AG04449 (cell line): ENCODE measurements at regions of chr11 and their contacts with region 1.

Region 1: GRCh38 chr11:75388386-75389275 is 10.7 kb upstream of the RPS3 start:
- DNase-seq: no peak
- H3K4me3 ChIP-seq: no peak overlapping the region
- CTCF ChIP-seq: peak; percentile 71

Region 2: DNA sequence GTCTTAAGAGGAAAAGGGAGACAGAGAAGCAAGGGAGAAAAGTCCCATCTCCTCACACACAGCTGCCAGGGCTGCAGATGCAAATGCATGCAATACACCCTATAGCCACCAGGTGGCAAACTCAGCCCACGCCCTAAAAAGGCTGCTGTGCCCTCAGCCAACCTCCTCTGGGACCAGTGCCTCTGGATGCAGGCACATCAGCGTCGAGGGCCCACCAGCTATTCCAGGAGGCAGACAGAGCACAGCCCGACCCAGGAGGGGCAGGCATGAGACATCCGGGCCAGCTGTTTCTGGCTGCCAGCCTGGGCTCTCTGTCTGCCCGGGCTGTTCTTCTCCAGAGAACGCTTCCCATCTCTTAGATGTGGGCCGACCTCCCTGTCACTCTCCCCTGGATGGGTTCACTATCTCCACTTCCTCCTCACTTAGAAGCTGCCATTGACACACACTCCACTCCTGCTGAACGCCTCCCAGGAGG is 108.4 kb before region 1 on chr11:
- CTCF ChIA-PET with region 1: interaction called, 534 read pairs
- POLR2A ChIA-PET with region 1: no interaction called
- DNase-seq: no peak
- H3K4me3 ChIP-seq: no peak overlapping the region
- CTCF ChIP-seq: peak; percentile 94

Region 3: GRCh38 chr11:75328426-75329277 is 60.0 kb before region 1 on chr11:
- CTCF ChIA-PET with region 1: interaction called, 396 read pairs
- POLR2A ChIA-PET with region 1: interaction called, 3 read pairs
- DNase-seq: peak; percentile 40
- H3K4me3 ChIP-seq: no peak overlapping the region
- CTCF ChIP-seq: peak; percentile 85

Region 4: DNA sequence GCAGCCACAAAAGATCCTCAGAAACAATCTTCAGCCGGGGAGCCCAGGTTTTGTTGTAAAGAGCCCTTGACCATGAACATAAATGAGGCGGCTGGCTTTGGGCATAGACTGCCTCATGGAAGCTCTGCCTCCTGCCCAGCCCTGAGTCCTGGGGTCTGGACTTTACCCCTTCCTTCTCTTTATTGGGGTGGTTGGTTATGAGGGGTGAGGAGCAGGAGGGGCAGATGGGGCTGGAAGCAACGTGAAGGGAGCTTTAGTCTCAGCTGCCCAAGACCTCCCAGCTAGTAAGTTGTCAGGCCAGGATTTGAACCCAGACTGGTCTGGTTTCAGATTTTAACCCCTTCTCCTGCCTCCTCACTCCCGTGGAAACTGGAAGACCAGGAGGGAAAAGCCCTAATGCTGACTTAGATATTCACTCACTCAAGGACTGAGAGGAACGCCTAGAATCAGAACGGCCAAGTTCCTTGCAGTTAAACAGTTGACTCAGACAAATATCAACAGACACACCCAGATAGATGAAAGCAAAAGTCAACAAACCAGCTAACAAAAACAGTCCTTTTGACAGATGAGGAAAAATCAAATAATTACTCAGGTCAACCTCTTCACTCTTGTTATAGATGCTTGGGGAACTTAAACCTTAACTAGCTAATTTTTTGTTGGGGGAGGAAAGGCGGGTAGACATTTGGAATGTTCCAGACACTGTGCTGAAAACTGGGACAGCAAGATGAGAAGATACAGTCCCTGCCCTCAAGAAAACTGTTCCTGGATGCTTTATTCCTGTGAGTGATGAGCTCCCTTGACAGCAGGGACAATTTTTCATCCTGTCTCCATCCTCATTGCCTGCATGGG is 16.5 kb before region 1 on chr11:
- CTCF ChIA-PET with region 1: interaction called, 62 read pairs
- POLR2A ChIA-PET with region 1: no interaction called
- DNase-seq: no peak
- H3K4me3 ChIP-seq: no peak overlapping the region
- CTCF ChIP-seq: no peak

Region 5: DNA sequence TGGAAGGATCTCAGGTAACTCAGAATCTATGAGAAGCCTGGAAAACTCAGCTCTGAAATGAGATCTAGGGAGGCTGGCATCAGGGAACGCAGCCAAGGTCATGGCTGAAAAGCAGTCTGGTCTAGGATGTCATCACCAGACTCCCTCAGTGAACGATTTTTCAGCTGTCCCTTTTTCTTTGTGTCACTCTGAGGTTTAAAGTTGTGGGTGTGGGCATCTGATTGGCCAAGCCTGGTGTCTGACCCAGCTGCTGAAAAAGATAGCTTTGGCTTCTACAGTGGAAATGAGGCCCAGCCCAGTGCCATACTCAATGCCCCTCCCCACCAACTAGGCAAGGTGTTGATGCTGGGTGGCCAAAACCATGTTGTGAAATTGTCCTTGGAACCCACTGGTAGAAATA is 25.2 kb after region 1 on chr11:
- CTCF ChIA-PET with region 1: interaction called, 25 read pairs
- POLR2A ChIA-PET with region 1: no interaction called
- DNase-seq: no peak
- H3K4me3 ChIP-seq: no peak overlapping the region
- CTCF ChIP-seq: no peak

Region 6: DNA sequence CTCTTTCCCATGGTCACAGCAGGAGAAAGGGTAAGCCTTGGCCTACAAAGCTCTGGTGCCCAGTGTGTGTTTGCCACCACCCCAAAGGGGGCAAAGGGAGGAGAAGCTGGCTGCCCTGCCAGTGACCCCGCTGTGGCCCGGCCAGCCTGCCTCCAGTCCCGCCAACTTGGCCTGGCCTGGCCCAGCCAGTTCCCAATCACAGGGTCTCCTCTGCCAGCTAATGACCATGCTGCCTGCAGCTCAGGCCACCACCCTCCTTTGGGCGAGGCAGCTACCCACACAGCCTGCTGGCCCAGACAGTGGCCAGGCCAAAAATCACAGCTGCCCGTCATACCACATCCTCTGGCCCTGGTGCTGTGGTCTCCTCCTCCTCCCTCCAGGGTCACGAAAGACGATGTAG is 132.1 kb after region 1 on chr11:
- CTCF ChIA-PET with region 1: interaction called, 270 read pairs
- POLR2A ChIA-PET with region 1: no interaction called
- DNase-seq: no peak
- H3K4me3 ChIP-seq: no peak overlapping the region
- CTCF ChIP-seq: no peak

Region 7: GRCh38 chr11:75539459-75540334 is 151.1 kb after region 1 on chr11:
- CTCF ChIA-PET with region 1: interaction called, 270 read pairs
- POLR2A ChIA-PET with region 1: no interaction called
- DNase-seq: no peak
- H3K4me3 ChIP-seq: no peak overlapping the region
- CTCF ChIP-seq: no peak